Endothelial cell of umbilical vein (primary cell): ENCODE measurements at regions of chr9 and their contacts with region 1.

Region 1: GRCh38 chr9:133485361-133486260 is 6.7 kb upstream of the SLC2A6 start:
- DNase-seq: no peak
- H3K4me3 ChIP-seq: no peak overlapping the region
- H3K27ac ChIP-seq: no peak overlapping the region
- H3K4me1 ChIP-seq: no peaks in the 10 kb centered on the region
- H3K27me3 ChIP-seq: no peaks in the 10 kb centered on the region
- CTCF ChIP-seq: no peak
- POLR2A ChIP-seq: no peak

Region 2: GRCh38 chr9:133238851-133239532 is 246.6 kb before region 1 on chr9:
- CTCF ChIA-PET with region 1: interaction called, 15 read pairs
- POLR2A ChIA-PET with region 1: no interaction called
- dilution Hi-C with region 1: no loop called
- intact Hi-C with region 1: loop called (anchors 2 kb)
- DNase-seq: peak; percentile 51
- H3K4me3 ChIP-seq: peak overlapping the region in 2 of 3 experiments; percentile 3 to 11
- H3K27ac ChIP-seq: peak overlapping the region; percentile 10
- H3K4me1 ChIP-seq: peaks cover 19% of the 10 kb centered on the region
- H3K27me3 ChIP-seq: peaks cover 2 to 6% of the 10 kb centered on the region in 2 experiments
- CTCF ChIP-seq: peak; percentile 85 to 92
- POLR2A ChIP-seq: no peak

Region 3: DNA sequence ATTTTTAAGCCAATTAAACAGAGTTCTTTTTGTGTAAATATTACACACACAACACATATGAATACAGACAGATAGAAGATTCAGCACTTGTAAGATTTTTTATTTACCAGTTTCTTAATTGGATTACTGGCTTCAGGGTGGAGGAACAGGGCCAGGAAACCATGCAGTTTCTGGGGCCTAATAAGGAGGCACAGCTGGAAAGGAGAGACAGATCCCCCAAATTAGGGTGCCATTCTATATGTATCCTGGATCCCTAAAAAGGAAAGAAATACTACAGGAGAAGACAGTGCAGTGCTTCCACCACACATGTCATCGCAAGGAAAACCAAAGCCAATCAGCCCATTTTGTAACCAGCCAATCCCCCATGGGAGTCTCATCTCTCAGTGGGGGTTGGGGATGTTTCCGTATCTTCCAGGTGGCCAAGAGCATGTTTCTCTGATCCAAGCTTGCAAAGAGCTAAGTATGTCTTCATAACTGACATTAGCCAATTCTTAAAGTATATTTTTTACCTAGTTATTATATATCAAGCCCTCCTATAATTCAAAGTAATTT is 194.8 kb before region 1 on chr9:
- CTCF ChIA-PET with region 1: no interaction called
- POLR2A ChIA-PET with region 1: no interaction called
- dilution Hi-C with region 1: no loop called
- intact Hi-C with region 1: no loop called
- DNase-seq: no peak
- H3K4me3 ChIP-seq: no peak overlapping the region
- H3K27ac ChIP-seq: no peak overlapping the region
- H3K4me1 ChIP-seq: no peaks in the 10 kb centered on the region
- H3K27me3 ChIP-seq: peaks cover 0 to 10% of the 10 kb centered on the region in 2 experiments
- CTCF ChIP-seq: no peak
- POLR2A ChIP-seq: no peak

Region 4: GRCh38 chr9:133356391-133357091 is 129.1 kb before region 1 on chr9 and contains the starts of genes SURF1 and SURF2:
- CTCF ChIA-PET with region 1: interaction called, 7 read pairs
- POLR2A ChIA-PET with region 1: no interaction called
- dilution Hi-C with region 1: no loop called
- intact Hi-C with region 1: loop called (anchors 1 kb)
- DNase-seq: peak; percentile 44
- H3K4me3 ChIP-seq: peak within 1 kb of the TSS; percentile 62 to 78 (median 77)
- H3K27ac ChIP-seq: peak within 1 kb of the TSS; percentile 60
- H3K4me1 ChIP-seq: peaks cover 10% of the 10 kb centered on the region
- H3K27me3 ChIP-seq: no peaks in the 10 kb centered on the region
- CTCF ChIP-seq: no peak
- POLR2A ChIP-seq: peak; percentile 65
- total RNA-seq, gene SURF1: 12.0 and 22.8 TPM in 2 replicates
- total RNA-seq, gene SURF2: 9.3 and 10.6 TPM in 2 replicates

Region 5: GRCh38 chr9:133396952-133397351 is 88.7 kb before region 1 on chr9:
- CTCF ChIA-PET with region 1: interaction called, 10 read pairs
- POLR2A ChIA-PET with region 1: no interaction called
- dilution Hi-C with region 1: no loop called
- intact Hi-C with region 1: loop called (anchors 2 kb)
- DNase-seq: peak; percentile 17
- H3K4me3 ChIP-seq: no peak overlapping the region
- H3K27ac ChIP-seq: no peak overlapping the region
- H3K4me1 ChIP-seq: no peaks in the 10 kb centered on the region
- H3K27me3 ChIP-seq: peaks cover 0 to 3% of the 10 kb centered on the region in 2 experiments
- CTCF ChIP-seq: peak; percentile 27 to 50
- POLR2A ChIP-seq: no peak

Region 6: DNA sequence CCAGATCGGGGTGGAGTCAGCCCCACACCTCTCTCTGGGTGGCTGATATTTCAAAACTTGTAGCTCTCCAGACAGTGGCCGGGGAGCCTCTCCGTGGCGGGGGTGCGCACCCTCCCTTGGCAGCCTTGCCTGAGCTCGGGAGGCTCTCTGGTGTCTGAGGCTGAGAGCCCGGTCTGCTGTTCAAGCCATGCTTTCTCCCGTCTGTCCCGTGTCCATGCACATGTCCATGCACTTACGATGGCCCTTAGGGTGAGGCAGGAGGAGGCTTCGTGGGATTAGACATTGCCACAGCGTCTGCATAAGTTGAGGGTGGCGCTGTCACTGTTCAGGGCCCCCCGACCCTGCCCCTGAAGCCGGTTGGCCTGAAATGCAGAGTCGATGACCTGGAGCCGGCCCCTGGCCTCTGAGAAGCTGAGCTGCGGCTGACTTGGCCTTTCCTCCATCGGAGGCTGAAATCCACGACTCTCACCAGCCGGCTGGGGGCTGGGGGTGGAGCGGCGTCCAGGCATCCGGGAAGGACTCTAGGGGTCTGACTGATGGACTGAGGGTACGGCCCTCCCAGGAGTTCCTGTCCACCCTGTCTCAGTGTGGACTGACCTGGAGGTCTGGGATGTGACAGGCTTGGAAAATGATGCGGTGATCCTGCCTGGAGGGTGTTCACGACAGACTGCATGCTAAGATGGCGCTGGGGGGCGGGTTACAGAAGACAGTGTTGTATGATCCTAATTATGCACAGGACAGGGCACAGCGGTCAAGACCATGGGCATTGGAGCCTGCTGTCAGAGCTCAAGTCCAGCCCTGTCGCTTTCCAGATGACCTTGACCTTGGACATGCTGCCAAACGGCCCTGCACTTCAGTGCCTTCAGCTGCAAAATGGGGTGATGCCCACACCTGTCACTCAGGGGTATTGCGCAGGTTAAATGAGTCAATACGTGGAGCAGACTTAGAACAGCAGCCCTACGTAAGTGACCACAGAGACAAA is 11.5 kb after region 1 on chr9:
- CTCF ChIA-PET with region 1: interaction called, 13 read pairs
- POLR2A ChIA-PET with region 1: no interaction called
- dilution Hi-C with region 1: no loop called
- intact Hi-C with region 1: no loop called
- DNase-seq: no peak
- H3K4me3 ChIP-seq: no peak overlapping the region
- H3K27ac ChIP-seq: no peak overlapping the region
- H3K4me1 ChIP-seq: no peaks in the 10 kb centered on the region
- H3K27me3 ChIP-seq: no peaks in the 10 kb centered on the region
- CTCF ChIP-seq: no peak
- POLR2A ChIP-seq: no peak